ENCODE measurements at regions of chrX and their contacts with region 1.

Region 1: GRCh38 chrX:82029571-82030218 is 827.8 kb downstream of the SH3BGRL start:
- DNase-seq: no peak
- H3K4me3 ChIP-seq: no peak overlapping the region
- H3K27ac ChIP-seq: no peak overlapping the region
- H3K4me1 ChIP-seq: no peaks in the 10 kb centered on the region
- H3K27me3 ChIP-seq: no peaks in the 10 kb centered on the region
- CTCF ChIP-seq: no peak
- EP300 ChIP-seq: no peak
- POLR2A ChIP-seq: no peak

Region 2: DNA sequence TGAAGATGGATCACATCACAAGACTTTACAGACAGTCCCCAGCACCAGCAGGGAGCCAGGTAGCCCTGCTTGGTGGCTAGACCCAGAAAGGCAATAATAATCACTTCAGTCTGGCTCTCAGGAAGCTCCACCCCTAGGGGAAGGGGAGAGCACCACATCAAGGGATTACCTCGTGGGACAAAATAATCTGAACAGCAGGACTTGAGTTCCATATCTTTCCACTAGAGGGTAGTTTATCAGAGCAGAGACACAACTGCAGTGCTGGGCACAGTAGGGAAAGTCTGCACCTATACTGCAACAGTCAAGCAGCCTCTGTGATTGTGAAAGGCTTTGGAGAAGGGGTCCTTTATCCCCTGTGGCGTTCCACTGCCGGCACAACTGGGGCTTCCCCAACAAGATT is 931.4 kb after region 1 on chrX:
- intact Hi-C with region 1: loop called in 1 of 4 experiments (anchors 5 kb)
- DNase-seq: no peak
- H3K4me3 ChIP-seq: no peak overlapping the region
- H3K27ac ChIP-seq: no peak overlapping the region
- H3K4me1 ChIP-seq: no peaks in the 10 kb centered on the region
- H3K27me3 ChIP-seq: no peaks in the 10 kb centered on the region
- CTCF ChIP-seq: no peak
- EP300 ChIP-seq: no peak
- POLR2A ChIP-seq: no peak

Measured in ovary (tissue), 10 donors.